Endothelial cell of umbilical vein (primary cell): ENCODE measurements at regions of chr9 and their contacts with region 1.

Region 1: GRCh38 chr9:104927912-104928740 is at the start of gene ABCA1:
- DNase-seq: peak; percentile 82
- H3K4me3 ChIP-seq: peak within 1 kb of the TSS; percentile 22 to 93 (median 53)
- H3K27ac ChIP-seq: no peak within 1 kb of the TSS
- H3K4me1 ChIP-seq: peaks cover 8% of the 10 kb centered on the region
- H3K27me3 ChIP-seq: no peaks in the 10 kb centered on the region
- CTCF ChIP-seq: no peak
- POLR2A ChIP-seq: no peak
- total RNA-seq, gene ABCA1: 6.6 and 9.8 TPM in 2 replicates

Region 2: GRCh38 chr9:104808035-104808614 is 120.0 kb before region 1 on chr9:
- CTCF ChIA-PET with region 1: interaction called, 6 read pairs
- POLR2A ChIA-PET with region 1: no interaction called
- dilution Hi-C with region 1: no loop called
- intact Hi-C with region 1: loop called (anchors 2 kb)
- DNase-seq: peak; percentile 46
- H3K4me3 ChIP-seq: no peak overlapping the region
- H3K27ac ChIP-seq: no peak overlapping the region
- H3K4me1 ChIP-seq: no peaks in the 10 kb centered on the region
- H3K27me3 ChIP-seq: no peaks in the 10 kb centered on the region
- CTCF ChIP-seq: peak; percentile 24 to 48
- POLR2A ChIP-seq: no peak

Region 3: GRCh38 chr9:104868687-104869404 is 59.3 kb before region 1 on chr9:
- CTCF ChIA-PET with region 1: interaction called, 67 read pairs
- POLR2A ChIA-PET with region 1: interaction called, 6 read pairs
- dilution Hi-C with region 1: no loop called
- intact Hi-C with region 1: no loop called
- DNase-seq: peak; percentile 86
- H3K4me3 ChIP-seq: no peak overlapping the region
- H3K27ac ChIP-seq: no peak overlapping the region
- H3K4me1 ChIP-seq: peaks cover 38% of the 10 kb centered on the region
- H3K27me3 ChIP-seq: no peaks in the 10 kb centered on the region
- CTCF ChIP-seq: no peak
- POLR2A ChIP-seq: no peak

Region 4: DNA sequence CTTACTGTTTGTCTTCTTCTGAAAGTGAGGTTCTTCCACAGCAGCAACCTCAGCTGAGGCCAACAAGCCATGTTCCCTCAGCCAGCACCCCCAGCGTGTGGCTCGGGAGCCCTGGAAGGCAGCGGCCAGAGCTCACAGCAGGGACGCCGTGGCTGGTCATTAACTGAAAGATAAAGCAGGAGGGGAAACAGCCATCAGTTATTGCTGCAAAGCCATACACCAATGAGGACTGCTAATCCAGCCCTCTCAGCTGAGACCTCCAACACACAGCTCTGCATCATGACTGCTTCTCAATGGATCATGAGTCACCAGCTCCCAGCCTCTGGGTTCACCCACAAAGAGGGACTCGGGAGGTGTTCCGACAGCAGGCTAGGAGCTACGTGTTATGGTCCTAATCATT is 24.5 kb before region 1 on chr9:
- CTCF ChIA-PET with region 1: no interaction called
- POLR2A ChIA-PET with region 1: no interaction called
- dilution Hi-C with region 1: no loop called
- intact Hi-C with region 1: no loop called
- DNase-seq: no peak
- H3K4me3 ChIP-seq: no peak overlapping the region
- H3K27ac ChIP-seq: no peak overlapping the region
- H3K4me1 ChIP-seq: no peaks in the 10 kb centered on the region
- H3K27me3 ChIP-seq: peaks cover 0 to 3% of the 10 kb centered on the region in 2 experiments
- CTCF ChIP-seq: no peak
- POLR2A ChIP-seq: no peak

Region 5: GRCh38 chr9:104948277-104948676 is 20.2 kb after region 1 on chr9:
- CTCF ChIA-PET with region 1: no interaction called
- POLR2A ChIA-PET with region 1: no interaction called
- dilution Hi-C with region 1: no loop called
- intact Hi-C with region 1: no loop called
- DNase-seq: no peak
- H3K4me3 ChIP-seq: no peak overlapping the region
- H3K27ac ChIP-seq: no peak overlapping the region
- H3K4me1 ChIP-seq: no peaks in the 10 kb centered on the region
- H3K27me3 ChIP-seq: no peaks in the 10 kb centered on the region
- CTCF ChIP-seq: no peak
- POLR2A ChIP-seq: no peak

Region 6: DNA sequence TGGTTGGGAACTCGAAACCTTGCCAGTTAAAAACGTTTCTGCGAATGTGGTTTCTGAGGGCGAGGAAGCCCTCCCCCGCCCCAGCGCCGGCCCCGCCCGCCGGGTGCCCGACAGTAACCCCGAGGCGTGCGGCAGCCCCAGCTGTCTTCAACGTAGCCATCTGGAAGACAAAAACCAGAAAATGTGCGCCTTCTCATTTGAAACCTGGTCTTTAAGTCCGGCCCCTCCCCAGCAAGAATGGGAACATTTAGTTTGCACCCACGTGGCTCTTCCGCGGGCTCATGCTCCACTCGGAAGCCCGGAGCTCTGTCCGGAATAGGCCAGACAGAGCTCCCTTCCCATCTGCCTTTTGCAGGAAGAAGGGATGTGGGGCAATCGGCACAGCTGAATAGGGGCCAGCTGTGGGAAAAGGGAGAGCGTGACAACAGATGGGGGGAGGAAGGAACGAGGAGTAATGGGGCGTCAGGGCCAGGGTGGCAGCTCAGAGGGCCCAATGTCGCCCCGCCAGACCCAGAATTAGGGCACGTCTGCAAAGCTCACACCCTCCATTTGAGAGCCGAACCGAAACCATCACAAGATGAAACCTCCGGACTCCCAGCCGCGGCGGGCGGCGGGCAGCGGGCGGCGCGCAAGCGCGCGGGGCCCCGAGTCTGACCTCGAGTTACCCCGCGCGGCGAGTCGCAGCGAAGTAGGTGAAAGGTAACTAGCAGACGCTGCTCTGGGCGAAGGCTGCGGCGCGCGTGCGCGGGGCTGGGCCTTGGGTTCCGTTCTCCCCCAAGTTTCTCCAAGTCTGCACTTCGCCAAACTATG is 63.2 kb after region 1 on chr9:
- CTCF ChIA-PET with region 1: interaction called, 4 read pairs
- POLR2A ChIA-PET with region 1: no interaction called
- dilution Hi-C with region 1: no loop called
- intact Hi-C with region 1: loop called (anchors 1 kb)
- DNase-seq: peak; percentile 83
- H3K4me3 ChIP-seq: peak overlapping the region; percentile 61 to 83 (median 76)
- H3K27ac ChIP-seq: peak overlapping the region; percentile 34
- H3K4me1 ChIP-seq: peaks cover 4% of the 10 kb centered on the region
- H3K27me3 ChIP-seq: no peaks in the 10 kb centered on the region
- CTCF ChIP-seq: no peak
- POLR2A ChIP-seq: peak; percentile 50

Region 7: DNA sequence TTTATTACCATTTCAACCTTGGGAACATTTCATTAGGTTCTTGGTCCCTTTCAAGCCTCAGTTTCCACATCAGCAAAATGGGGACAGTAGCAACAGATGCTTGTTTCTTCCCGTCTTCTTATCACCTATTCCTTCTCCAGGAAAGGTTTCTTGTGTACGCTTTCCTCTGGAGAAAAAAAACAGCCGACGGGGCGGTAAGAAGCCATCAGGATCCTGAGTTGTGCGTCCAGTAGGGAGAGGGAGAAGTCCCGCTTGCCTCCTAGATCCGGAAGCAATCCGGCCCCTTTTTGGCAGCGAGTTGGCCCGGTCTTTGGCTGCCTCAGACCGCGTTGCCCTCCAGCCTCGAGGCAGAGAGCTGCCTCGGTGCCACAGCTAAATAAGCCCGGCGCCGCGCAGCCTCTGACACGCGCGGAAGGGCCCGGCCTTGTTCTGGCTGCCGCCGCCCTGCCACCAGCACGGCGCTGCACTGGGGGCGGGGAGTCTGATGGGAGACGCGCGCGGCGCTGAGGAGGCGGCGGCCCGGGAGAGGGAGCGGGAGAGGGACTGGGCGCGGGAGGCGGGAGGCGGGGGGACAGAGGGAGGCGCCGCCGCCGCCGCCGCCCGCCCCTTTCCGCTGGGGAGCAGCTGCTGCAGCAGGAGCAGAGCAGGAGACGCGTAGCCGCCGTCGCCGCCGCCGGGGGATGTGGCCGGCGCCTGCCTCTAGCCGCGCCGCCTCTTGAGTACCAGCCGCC is 316.0 kb after region 1 on chr9 and contains the start of gene SLC44A1:
- CTCF ChIA-PET with region 1: interaction called, 4 read pairs
- POLR2A ChIA-PET with region 1: no interaction called
- dilution Hi-C with region 1: no loop called
- intact Hi-C with region 1: loop called (anchors 2 kb)
- DNase-seq: peak; percentile 96
- H3K4me3 ChIP-seq: peak within 1 kb of the TSS; percentile 69 to 90 (median 72)
- H3K27ac ChIP-seq: peak within 1 kb of the TSS; percentile 95
- H3K4me1 ChIP-seq: peaks cover 28% of the 10 kb centered on the region
- H3K27me3 ChIP-seq: no peaks in the 10 kb centered on the region
- CTCF ChIP-seq: no peak
- POLR2A ChIP-seq: peak; percentile 62
- total RNA-seq, gene SLC44A1: 35.3 and 37.7 TPM in 2 replicates

Region 8: GRCh38 chr9:105414947-105415661 is 487.0 kb after region 1 on chr9:
- CTCF ChIA-PET with region 1: interaction called, 3 read pairs
- POLR2A ChIA-PET with region 1: no interaction called
- dilution Hi-C with region 1: no loop called
- intact Hi-C with region 1: loop called (anchors 1 kb)
- DNase-seq: peak; percentile 51
- H3K4me3 ChIP-seq: no peak overlapping the region
- H3K27ac ChIP-seq: no peak overlapping the region
- H3K4me1 ChIP-seq: no peaks in the 10 kb centered on the region
- H3K27me3 ChIP-seq: no peaks in the 10 kb centered on the region
- CTCF ChIP-seq: peak; percentile 70 to 72
- POLR2A ChIP-seq: no peak